Dendritic cell treated with granulocyte-macrophage colony-stimulating factor and Interleukin-4, amounts not matched to agents 40 ng/mL and 50 ng/mL, for 4 days (primary cell): ENCODE measurements at regions of chr10 and their contacts with region 1.

Region 1: DNA sequence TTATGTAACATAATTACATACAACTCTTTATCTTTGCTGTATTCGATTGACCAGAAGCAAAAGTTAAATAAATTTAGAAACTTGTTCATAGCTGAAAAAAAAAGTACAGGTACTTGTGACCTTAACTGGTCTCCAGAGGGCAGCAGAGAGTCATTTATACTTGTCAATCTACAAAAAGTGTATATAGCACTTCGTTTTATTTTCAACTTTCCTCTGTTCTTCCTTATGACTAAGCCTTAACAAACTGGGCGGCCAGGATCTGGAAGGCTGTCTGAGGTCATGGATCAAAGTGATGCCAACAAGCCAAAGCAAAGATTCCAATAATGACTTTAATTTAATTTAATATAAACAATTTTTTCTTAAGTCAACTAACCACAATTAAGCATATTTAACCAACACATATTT is 29.8 kb downstream of the C10orf67 start:
- H3K4me3 Mint-ChIP-seq: no peak overlapping the region
- H3K27ac Mint-ChIP-seq: no peak overlapping the region
- H3K4me1 Mint-ChIP-seq: no peaks in the 10 kb centered on the region
- H3K27me3 Mint-ChIP-seq: peaks cover 14% of the 10 kb centered on the region

Region 2: DNA sequence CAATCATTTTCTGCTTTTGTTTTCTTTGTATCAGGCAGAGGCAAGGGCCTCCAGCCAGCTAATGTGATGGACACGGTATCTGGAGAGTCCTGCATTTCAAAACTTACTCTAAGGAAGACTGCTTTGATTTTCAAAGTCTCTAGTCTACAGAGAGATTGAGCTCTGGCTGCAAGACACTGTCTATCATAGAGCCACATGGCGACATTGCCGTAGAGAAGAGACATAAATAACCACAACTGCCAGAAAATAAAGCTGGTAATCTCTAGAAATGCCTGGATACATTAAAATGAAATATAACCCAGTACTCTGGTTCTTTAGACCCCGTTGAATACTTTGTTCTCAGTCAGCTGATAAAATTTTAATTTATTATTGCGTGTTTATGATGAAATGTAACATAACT is 214.8 kb after region 1 on chr10:
- intact Hi-C with region 1: loop called (anchors 1 kb)
- H3K4me3 Mint-ChIP-seq: no peak overlapping the region
- H3K27ac Mint-ChIP-seq: no peak overlapping the region
- H3K4me1 Mint-ChIP-seq: peaks cover 25% of the 10 kb centered on the region
- H3K27me3 Mint-ChIP-seq: no peaks in the 10 kb centered on the region

Region 3: DNA sequence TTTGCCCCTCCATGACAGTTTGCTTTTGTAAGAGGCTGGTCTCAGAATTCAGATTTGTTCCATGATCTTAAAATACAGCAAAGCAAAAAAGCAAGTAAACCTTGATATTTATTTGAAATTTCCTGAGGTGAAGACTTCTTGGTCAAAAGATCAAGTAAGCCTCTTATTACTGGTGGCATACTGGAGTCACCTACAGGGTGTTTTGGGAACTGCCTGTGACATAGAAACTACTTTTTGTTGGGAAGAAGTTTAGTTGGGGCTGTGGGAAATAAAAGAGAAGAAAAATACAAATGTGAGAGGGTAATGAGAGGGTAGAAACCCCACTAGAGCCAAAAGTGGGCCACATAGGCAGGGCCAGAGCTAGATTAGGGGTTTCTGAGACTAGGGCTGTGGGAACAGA is 341.9 kb after region 1 on chr10:
- intact Hi-C with region 1: loop called (anchors 1 kb)
- H3K4me3 Mint-ChIP-seq: no peak overlapping the region
- H3K27ac Mint-ChIP-seq: no peak overlapping the region
- H3K4me1 Mint-ChIP-seq: peaks cover 6% of the 10 kb centered on the region
- H3K27me3 Mint-ChIP-seq: peaks cover 25% of the 10 kb centered on the region

Region 4: DNA sequence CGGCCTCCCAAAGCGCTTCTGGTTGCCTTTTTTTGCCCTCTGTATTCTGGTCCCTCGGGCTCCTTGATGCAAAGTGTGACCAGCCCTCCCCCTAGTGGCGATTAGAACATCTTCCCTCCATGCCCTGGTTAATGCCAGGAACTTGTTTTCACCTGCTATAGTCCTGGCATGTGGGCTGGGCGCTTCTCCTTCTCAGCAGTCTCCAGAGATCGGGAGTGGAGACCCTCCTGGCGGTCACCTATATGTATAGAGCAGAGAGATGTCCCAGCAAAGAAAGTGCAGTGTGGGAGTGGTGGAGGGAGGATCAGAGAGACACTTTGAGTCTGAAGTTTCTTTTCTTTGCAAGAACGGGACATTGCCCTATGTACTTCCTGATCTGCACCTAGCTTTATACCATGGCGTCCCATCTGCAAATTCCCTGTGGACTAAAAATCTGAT is 388.2 kb after region 1 on chr10:
- intact Hi-C with region 1: loop called (anchors 1 kb)
- H3K4me3 Mint-ChIP-seq: no peak overlapping the region
- H3K27ac Mint-ChIP-seq: no peak overlapping the region
- H3K4me1 Mint-ChIP-seq: peaks cover 4% of the 10 kb centered on the region
- H3K27me3 Mint-ChIP-seq: peaks cover 12% of the 10 kb centered on the region